ENCODE measurements at regions of chr17 and their contacts with region 1.

Region 1: DNA sequence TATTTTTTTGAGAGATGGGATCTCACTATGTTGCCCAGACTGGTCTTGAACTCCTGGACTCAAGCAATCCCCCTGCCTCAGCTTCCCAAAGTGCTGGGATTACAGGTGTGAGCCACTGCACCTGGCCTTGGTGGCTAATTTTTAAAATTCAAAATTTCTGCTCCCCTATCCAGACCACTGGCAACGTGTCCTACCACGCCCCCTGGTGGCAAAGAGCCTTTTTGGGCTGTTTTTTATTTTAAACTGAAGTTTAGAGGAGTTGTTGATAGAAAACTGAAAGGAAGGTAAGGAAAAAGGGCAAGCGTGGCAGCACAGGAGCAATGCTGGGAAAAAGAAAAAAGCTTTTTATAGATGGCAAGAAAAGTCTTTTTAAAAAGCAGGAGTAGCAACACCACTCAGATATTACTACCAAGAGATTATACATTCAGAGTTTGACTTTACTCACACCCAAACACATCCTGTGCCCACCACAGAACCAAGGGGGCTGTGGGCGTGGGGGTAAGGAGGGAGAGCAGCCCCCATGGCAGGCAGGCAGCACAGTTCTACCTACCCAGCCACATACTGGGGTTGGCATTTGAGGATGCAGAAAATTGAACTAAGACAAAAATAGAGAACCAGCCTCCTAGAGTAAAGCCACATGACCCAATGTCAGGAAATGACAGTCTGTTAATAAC is 4.2 kb upstream of the MXRA7 start:
- DNase-seq: peak; percentile 87
- H3K4me3 Mint-ChIP-seq: peak overlapping the region; percentile 18
- H3K27ac Mint-ChIP-seq: peak overlapping the region; percentile 77
- H3K4me1 Mint-ChIP-seq: peaks cover 57% of the 10 kb centered on the region
- H3K27me3 Mint-ChIP-seq: no peaks in the 10 kb centered on the region

Region 2: DNA sequence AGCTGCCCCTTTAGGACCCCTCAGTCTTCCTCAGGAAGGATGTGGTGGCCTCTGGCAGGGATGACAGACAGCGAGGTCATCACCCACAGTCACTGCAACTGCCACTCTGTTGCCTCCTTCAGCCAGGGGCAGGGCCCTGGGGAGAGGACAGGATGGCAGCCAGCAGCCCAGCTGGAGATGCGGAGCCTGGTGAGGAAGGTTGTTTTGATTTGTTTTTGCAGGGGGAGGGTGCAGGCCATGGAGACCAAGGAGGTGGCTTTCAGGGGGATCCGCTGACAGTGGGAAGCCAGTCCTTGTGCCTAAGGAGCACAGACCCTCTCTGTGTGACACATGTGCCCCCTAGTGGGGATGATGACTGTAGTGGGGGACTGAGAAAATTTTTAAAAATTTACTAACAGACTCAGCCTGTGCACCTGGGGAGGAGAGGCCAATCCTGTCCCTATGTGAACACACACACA is 167.7 kb before region 1 on chr17:
- CTCF ChIA-PET with region 1: no interaction called
- POLR2A ChIA-PET with region 1: no interaction called
- DNase-seq: peak; percentile 79
- H3K4me3 Mint-ChIP-seq: no peak overlapping the region
- H3K27ac Mint-ChIP-seq: no peak overlapping the region
- H3K4me1 Mint-ChIP-seq: peaks cover 12% of the 10 kb centered on the region
- H3K27me3 Mint-ChIP-seq: peaks cover 14% of the 10 kb centered on the region

Region 3: GRCh38 chr17:76631829-76632565 is 83.0 kb before region 1 on chr17:
- CTCF ChIA-PET with region 1: no interaction called
- POLR2A ChIA-PET with region 1: no interaction called
- DNase-seq: no peak
- H3K4me3 Mint-ChIP-seq: no peak overlapping the region
- H3K27ac Mint-ChIP-seq: no peak overlapping the region
- H3K4me1 Mint-ChIP-seq: no peaks in the 10 kb centered on the region
- H3K27me3 Mint-ChIP-seq: peaks cover 1% of the 10 kb centered on the region

Region 4: DNA sequence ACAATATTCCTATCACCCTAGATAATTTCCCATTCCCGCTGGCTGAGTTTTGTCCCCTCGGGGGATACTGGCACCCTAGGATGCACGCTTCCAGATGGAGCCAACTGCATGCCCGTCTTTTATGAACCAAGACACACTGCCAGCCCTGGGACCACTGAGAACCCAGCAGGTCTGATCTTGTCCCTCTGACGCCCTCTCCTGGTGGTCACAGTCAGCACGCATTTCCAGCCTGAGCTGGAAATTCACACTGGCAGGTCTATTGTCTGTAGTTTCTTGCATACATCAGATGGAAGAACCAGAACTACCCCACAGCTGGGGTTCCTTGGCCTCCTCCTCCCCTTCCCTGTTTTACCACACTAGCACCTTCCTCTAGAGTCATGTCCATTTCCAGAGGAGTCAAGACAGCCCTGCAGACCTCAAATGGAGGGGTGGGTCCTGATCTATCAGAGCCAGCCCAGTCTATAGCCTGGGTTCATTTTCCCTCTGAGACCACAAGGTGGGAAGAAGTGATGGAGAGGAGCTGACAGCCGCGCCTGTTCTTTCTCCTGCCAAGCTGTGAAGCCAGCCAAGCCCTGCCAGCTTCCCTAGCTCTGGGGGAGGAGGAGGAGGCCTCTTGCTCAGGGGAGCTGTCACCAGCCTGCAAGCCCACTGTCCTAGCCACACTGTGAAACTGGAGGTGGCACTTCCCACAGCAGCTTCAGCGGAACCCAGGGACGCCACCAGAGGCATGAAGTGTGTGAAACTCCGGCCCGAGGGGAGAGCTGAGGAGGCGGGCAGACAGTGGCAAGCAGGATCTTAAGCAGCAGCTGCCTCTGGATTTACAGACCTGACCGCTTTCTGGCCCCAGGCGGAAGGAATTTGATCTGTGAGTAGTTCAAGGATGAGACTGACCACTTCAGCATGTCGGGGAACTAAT is 33.5 kb before region 1 on chr17:
- CTCF ChIA-PET with region 1: interaction called, 10 read pairs
- POLR2A ChIA-PET with region 1: no interaction called
- DNase-seq: peak; percentile 83
- H3K4me3 Mint-ChIP-seq: no peak overlapping the region
- H3K27ac Mint-ChIP-seq: peak overlapping the region; percentile 62
- H3K4me1 Mint-ChIP-seq: peaks cover 6% of the 10 kb centered on the region
- H3K27me3 Mint-ChIP-seq: no peaks in the 10 kb centered on the region

Region 5: GRCh38 chr17:76704805-76705204 is 10.2 kb before region 1 on chr17:
- CTCF ChIA-PET with region 1: interaction called, 13 read pairs
- POLR2A ChIA-PET with region 1: no interaction called
- DNase-seq: no peak
- H3K4me3 Mint-ChIP-seq: no peak overlapping the region
- H3K27ac Mint-ChIP-seq: no peak overlapping the region
- H3K4me1 Mint-ChIP-seq: peaks cover 6% of the 10 kb centered on the region
- H3K27me3 Mint-ChIP-seq: peaks cover 1% of the 10 kb centered on the region

Region 6: DNA sequence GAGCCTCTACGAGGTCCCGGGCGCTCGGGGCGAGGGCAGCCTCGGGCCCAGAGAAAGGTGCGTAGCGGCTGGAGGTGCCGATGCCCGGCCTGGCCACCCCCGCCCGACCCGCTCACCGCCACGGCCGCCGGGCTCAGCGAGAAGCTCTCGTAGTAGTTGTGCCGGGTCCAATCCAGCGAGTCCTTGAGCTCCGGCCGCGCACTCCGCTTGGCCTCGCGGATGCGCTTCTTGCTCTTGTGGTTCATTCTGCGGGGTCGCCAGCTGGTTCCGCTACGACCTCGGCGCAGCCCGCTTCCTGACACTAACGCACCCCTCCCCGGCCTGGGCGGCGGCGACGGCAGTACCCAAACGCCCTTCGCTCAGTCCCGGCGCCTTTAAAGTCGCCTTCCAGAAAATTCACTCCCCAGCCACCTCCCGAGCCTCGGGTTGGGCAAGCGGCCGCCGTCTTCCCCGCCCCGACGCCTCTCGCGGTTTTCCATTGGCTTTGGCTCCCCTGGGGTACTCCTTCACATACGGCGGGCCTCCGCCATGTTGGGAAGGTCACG is 11.3 kb after region 1 on chr17 and contains the start of gene JMJD6:
- CTCF ChIA-PET with region 1: interaction called, 24 read pairs
- POLR2A ChIA-PET with region 1: interaction called, 4 read pairs
- DNase-seq: peak; percentile 97
- H3K4me3 Mint-ChIP-seq: peak within 1 kb of the TSS; percentile 99
- H3K27ac Mint-ChIP-seq: peak within 1 kb of the TSS; percentile 98
- H3K4me1 Mint-ChIP-seq: peaks cover 63% of the 10 kb centered on the region
- H3K27me3 Mint-ChIP-seq: no peaks in the 10 kb centered on the region
- total RNA-seq, gene JMJD6: 42.9 to 51.3 TPM

Region 7: DNA sequence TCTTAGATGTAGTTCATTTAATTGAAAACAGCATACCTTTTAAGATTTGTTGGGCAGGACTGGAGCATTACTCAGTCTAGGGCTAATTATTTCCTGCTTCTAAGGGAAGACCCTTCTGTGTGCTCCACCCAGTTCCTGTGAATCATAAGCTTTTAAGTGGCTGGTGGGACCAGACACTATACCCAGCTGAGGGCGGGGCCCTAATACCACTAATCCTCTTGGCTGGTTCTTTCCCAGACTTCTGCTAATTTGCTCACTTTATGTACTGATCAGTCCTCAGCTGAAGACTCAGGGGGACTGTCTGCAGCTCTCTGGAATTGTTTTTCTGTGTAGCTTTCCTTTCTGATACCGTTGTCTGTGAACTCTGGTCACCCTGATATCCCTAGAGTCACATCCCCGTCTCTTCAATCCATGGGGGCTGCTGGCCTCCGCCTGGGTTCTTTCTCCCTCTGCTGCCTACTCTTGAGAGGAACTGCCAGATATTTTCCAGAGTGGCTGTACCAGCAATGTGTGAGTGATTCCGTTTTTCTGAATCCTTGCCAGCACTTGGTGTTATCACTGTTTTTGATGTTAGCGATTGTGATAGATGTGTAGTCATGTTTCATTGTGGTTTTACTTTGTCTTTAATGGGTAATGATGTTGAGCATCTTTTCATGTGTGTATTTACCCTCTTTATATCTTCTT is 58.0 kb after region 1 on chr17:
- CTCF ChIA-PET with region 1: no interaction called
- POLR2A ChIA-PET with region 1: no interaction called
- DNase-seq: peak; percentile 24
- H3K4me3 Mint-ChIP-seq: peak overlapping the region; percentile 35
- H3K27ac Mint-ChIP-seq: peak overlapping the region; percentile 83
- H3K4me1 Mint-ChIP-seq: peaks cover 30% of the 10 kb centered on the region
- H3K27me3 Mint-ChIP-seq: no peaks in the 10 kb centered on the region

Region 8: DNA sequence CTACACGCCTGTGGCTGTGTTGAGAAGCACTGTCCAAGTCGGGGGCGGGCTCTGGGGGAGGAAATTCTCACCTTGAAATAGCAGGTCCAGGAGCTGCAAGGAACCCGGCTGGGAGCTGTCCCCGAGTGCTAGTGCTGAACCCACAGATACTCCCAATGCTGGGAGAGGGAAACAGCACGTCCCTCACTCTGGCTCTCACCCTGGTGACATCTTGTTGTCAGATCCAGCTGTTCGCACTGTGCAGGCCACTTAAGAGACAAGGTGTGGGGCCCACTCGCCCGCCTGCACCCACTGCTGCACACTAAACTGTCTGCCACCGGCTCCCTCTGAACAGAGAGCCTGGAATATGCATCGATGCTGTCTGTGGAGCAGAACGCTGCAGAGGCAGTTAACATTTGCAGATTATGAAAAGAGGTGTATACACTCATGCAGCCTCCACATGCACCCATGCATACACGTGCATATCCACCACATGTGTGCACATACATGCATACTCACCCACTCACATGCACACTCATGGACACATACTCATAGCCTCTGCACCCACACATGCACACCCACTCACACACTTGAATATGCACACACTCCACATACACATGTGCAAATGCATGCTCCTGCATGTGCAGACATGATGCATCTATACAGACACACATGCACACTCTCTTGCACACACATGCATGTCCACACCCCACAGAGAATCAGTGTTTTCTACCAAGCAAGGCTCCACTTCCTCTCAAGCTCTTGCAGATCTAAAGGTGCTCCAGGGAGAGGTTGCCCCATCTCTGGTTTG is 195.2 kb after region 1 on chr17:
- CTCF ChIA-PET with region 1: no interaction called
- POLR2A ChIA-PET with region 1: no interaction called
- DNase-seq: peak; percentile 63
- H3K4me3 Mint-ChIP-seq: no peak overlapping the region
- H3K27ac Mint-ChIP-seq: no peak overlapping the region
- H3K4me1 Mint-ChIP-seq: no peaks in the 10 kb centered on the region
- H3K27me3 Mint-ChIP-seq: peaks cover 4% of the 10 kb centered on the region